A673 (cell line): ENCODE measurements at regions of chr6 and their contacts with region 1.

Region 1: DNA sequence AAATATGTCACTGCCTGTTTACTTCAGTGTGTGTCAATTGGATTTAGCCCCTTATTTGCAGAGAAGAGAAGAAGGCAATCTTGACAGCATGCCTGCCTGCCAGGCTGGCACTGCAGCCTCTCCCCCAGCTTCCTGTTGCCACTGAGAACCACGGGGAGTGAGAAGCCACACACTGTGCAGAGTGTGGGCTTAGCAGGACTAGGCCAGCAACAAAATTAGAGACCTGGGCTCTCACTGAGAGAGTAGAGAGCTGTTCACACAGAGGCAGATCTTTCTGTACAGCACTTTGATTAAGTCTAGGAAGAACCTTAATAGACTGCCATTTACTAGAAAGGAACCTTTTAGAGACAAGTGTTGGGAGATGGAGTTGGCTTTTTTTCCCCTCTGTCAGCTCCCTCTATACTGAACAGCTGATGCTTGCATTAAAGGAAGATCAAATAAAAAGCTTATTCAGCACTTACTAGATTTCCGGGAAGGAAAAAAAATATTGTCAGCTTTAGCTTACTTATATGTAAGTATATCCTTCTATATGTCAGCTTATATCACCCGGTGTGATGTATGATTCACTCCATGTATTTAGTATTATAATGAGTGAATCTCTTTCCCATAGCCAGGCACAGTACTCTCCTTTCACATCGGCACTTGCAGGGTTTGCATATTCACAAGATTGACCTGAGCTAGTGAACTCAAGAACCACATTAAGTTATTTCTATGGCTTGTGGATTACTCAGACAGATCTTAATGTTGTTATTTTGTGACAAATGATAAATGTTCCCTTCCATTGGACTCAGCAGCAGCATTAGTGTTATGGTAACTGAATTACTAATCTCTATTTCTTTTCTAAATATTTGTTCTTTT is 851.0 kb upstream of the EPHA7 start:
- DNase-seq: peak; percentile 97
- H3K4me3 ChIP-seq: peak overlapping the region; percentile 0
- H3K27ac ChIP-seq: peak overlapping the region; percentile 63
- H3K4me1 ChIP-seq: peaks cover 40% of the 10 kb centered on the region
- H3K27me3 ChIP-seq: no peaks in the 10 kb centered on the region
- CTCF ChIP-seq: no peak

Region 2: GRCh38 chr6:93701526-93701925 is 568.8 kb before region 1 on chr6:
- CTCF ChIA-PET with region 1: no interaction called
- POLR2A ChIA-PET with region 1: no interaction called
- intact Hi-C with region 1: no loop called
- DNase-seq: no peak
- H3K4me3 ChIP-seq: no peak overlapping the region
- H3K27ac ChIP-seq: no peak overlapping the region
- H3K4me1 ChIP-seq: no peaks in the 10 kb centered on the region
- H3K27me3 ChIP-seq: no peaks in the 10 kb centered on the region
- CTCF ChIP-seq: no peak

Region 3: DNA sequence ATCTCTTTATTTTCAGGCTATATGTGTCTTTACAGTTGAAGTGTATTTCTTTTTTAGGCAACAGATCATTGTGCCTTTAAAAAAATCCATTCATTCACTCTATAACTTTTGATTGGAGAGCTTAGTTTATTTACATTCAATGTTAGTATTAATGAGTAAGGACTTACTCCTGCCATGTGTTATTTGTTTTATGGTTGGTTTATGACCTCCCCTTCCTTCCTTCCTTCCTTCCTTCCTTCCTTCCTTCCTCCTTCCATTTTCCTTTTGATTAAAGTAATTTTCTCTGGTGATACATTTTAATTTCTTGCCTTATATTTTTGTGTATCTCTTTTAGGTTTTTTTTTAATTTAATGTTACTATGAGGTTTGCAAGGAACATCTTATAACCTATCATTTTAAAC is 154.4 kb after region 1 on chr6:
- CTCF ChIA-PET with region 1: no interaction called
- POLR2A ChIA-PET with region 1: no interaction called
- intact Hi-C with region 1: loop called (anchors 2 kb)
- DNase-seq: peak; percentile 80
- H3K4me3 ChIP-seq: no peak overlapping the region
- H3K27ac ChIP-seq: peak overlapping the region; percentile 77
- H3K4me1 ChIP-seq: peaks cover 9% of the 10 kb centered on the region
- H3K27me3 ChIP-seq: no peaks in the 10 kb centered on the region
- CTCF ChIP-seq: no peak

Region 4: GRCh38 chr6:94478133-94479005 is 208.0 kb after region 1 on chr6:
- CTCF ChIA-PET with region 1: no interaction called
- POLR2A ChIA-PET with region 1: no interaction called
- intact Hi-C with region 1: loop called (anchors 2 kb)
- DNase-seq: peak; percentile 94
- H3K4me3 ChIP-seq: no peak overlapping the region
- H3K27ac ChIP-seq: peak overlapping the region; percentile 25
- H3K4me1 ChIP-seq: peaks cover 19% of the 10 kb centered on the region
- H3K27me3 ChIP-seq: no peaks in the 10 kb centered on the region
- CTCF ChIP-seq: no peak

Region 5: DNA sequence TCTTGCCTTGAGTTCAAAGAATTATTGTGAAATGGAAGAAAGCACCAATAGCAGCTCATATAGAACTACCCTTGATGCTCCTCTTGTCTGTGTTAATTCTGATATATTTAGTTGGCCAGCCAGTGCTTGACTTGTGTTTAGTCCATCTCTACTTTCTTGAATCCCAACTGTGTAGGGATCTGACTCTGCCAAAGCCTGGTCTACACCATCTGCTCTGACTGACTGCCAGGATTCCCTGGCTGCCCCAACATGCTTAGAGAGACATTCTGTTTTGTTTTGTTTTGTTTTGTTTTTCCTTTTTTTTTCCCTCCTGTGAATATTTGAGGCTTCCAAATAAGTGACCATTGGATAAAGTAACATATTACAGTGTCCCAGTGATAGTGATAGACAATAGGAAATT is 353.3 kb after region 1 on chr6:
- CTCF ChIA-PET with region 1: no interaction called
- POLR2A ChIA-PET with region 1: no interaction called
- intact Hi-C with region 1: loop called (anchors 10 kb)
- DNase-seq: no peak
- H3K4me3 ChIP-seq: no peak overlapping the region
- H3K27ac ChIP-seq: no peak overlapping the region
- H3K4me1 ChIP-seq: no peaks in the 10 kb centered on the region
- H3K27me3 ChIP-seq: no peaks in the 10 kb centered on the region
- CTCF ChIP-seq: no peak